HepG2 (cell line): ENCODE measurements at regions of chr1 and their contacts with region 1.

Region 1: GRCh38 chr1:221858818-221859611 is 117.1 kb upstream of the DUSP10 start:
- DNase-seq: no peak
- ATAC-seq: no peak
- H3K4me3 ChIP-seq: no peak overlapping the region
- H3K27ac ChIP-seq: no peak overlapping the region
- H3K4me1 ChIP-seq: no peaks in the 10 kb centered on the region
- H3K27me3 ChIP-seq: no peaks in the 10 kb centered on the region
- CTCF ChIP-seq: no peak
- EP300 ChIP-seq: no peak
- POLR2A ChIP-seq: no peak
- RAD21 ChIP-seq: no peak

Region 2: DNA sequence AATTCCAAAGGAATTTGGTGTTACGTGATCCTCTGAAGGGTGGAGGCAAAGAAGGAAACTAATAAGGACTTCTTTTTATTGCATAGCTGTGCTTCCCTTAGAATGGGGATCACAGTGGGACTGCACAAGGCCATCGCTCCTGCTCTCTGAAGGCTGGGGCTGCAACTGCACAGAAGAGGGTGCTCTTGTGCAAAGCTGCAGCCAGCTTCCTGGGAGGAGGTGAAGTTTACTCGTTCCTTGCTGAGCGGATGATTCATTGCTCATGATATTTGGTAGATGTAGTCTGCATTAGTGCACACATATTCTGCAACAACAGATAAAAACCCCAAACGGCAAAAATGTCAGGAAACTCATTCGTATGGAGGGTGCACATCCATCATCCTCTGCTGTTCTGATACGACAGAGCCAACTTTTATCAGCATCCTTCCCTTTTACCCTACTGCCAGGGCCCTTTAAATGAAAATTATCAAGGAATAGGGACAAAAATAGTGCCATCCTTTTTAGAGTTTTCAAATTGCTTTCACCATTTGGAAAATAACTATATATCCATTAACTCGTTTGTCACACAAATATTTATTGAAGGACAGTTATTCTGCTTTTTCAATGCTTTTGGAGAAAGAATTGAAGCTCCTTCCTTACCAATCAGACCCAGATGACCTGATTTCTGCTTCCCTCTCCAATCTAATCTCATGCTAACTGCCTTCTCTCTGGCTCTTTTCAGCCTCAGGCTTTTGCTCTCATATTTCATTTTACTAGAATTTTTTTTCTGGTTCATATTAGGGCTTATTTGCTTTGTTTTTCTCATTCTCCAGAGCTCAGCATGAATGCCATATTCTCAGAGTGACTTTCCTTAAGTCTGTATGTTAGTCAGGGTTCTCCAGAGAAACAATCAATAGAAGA is 380.7 kb before region 1 on chr1:
- CTCF ChIA-PET with region 1: no interaction called
- POLR2A ChIA-PET with region 1: no interaction called
- in situ Hi-C with region 1: no loop called
- intact Hi-C with region 1: loop called (anchors 5 kb)
- DNase-seq: peak; percentile 12
- ATAC-seq: peak; percentile 92
- H3K4me3 ChIP-seq: no peak overlapping the region
- H3K27ac ChIP-seq: no peak overlapping the region
- H3K4me1 ChIP-seq: no peaks in the 10 kb centered on the region
- H3K27me3 ChIP-seq: no peaks in the 10 kb centered on the region
- CTCF ChIP-seq: peak; percentile 80
- EP300 ChIP-seq: no peak
- POLR2A ChIP-seq: no peak
- RAD21 ChIP-seq: peak; percentile 57

Region 3: DNA sequence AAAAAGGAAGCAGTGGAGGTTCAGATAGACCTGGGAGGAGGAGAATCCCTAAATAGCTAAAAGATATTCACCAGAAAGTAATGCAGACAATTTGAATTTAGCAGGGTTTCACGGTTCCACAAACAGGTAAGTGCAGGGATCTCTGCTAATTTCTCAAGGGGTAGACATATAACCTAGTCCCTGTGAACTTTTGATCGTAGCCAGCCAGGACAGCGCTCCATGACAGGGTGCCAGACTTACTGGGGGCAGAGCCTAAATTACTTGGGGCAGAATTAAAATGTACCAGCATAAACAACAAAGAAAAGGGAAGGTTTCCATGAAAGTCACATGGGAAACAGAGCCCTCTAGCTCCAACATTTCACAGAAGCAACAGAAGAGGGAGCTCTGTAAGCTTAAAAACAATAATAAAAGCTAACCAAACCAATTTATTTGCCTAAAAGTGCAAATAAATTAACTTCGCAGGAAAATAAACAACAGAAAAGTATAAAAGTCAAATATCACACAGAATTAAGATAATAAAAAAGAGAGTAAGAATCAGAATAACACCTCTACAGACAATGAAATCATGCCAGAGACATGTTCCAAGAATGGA is 315.4 kb before region 1 on chr1:
- CTCF ChIA-PET with region 1: no interaction called
- POLR2A ChIA-PET with region 1: no interaction called
- in situ Hi-C with region 1: no loop called
- intact Hi-C with region 1: loop called (anchors 2 kb)
- DNase-seq: no peak
- ATAC-seq: no peak; the same call in 2 of the 3 replicates
- H3K4me3 ChIP-seq: no peak overlapping the region
- H3K27ac ChIP-seq: no peak overlapping the region
- H3K4me1 ChIP-seq: no peaks in the 10 kb centered on the region
- H3K27me3 ChIP-seq: no peaks in the 10 kb centered on the region
- CTCF ChIP-seq: peak; percentile 29; the same call in 1 of the 2 replicates
- EP300 ChIP-seq: no peak
- POLR2A ChIP-seq: no peak
- RAD21 ChIP-seq: no peak

Region 4: GRCh38 chr1:222124602-222125001 is 265.6 kb after region 1 on chr1:
- CTCF ChIA-PET with region 1: no interaction called
- POLR2A ChIA-PET with region 1: no interaction called
- in situ Hi-C with region 1: no loop called
- intact Hi-C with region 1: no loop called
- DNase-seq: no peak
- ATAC-seq: peak; percentile 85
- H3K4me3 ChIP-seq: no peak overlapping the region
- H3K27ac ChIP-seq: no peak overlapping the region
- H3K4me1 ChIP-seq: no peaks in the 10 kb centered on the region
- H3K27me3 ChIP-seq: no peaks in the 10 kb centered on the region
- CTCF ChIP-seq: peak; percentile 54
- EP300 ChIP-seq: no peak
- POLR2A ChIP-seq: no peak
- RAD21 ChIP-seq: no peak